ENCODE measurements at regions of chr6 and their contacts with region 1.

Region 1: DNA sequence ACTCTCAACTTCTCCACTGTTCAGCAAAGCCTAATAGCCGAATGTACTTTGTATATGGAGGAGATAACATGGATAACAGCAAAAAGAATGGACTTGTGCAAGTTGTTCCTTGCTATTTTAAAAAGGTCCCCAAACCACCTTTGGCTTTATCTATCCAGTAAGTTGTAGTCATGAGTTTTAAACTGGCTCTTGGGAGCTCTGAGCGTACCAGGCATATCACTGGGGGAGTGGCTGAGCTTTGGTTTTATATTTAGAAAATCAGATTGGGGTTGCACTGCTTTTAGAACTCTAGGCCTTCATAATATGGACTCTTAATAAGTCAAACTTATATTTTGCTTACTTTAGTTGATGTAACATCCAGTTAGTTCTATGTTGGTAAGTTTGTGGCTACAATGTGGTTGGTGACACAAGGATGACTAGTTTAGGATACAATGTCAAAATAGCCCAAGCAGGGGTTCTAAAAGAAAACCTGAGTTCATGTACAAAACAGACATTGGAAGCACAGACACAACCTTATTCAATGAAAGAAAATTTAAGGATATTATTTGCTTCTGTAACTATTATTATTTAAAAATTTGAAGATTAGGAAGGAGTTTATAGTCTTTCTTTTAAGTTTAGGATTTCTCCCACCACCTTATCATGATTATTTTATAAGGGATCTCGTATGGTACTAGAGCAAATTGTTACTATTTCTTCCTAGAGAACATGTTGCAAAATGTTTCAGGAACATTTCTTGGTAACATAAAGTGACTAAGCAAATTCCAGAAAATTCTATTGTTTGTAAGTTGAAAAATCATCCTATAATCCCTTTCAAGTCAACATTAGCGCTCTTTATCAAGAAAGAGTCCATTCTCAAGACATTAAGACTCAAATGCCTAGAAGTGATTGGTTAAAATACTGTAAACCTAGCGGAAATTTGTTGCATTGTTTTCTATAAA is 165.8 kb upstream of the SUPT3H start:
- DNase-seq: no peak
- H3K4me3 Mint-ChIP-seq: no peak overlapping the region
- H3K27ac Mint-ChIP-seq: no peak overlapping the region
- H3K4me1 Mint-ChIP-seq: peaks cover 23% of the 10 kb centered on the region
- H3K27me3 Mint-ChIP-seq: no peaks in the 10 kb centered on the region

Region 2: DNA sequence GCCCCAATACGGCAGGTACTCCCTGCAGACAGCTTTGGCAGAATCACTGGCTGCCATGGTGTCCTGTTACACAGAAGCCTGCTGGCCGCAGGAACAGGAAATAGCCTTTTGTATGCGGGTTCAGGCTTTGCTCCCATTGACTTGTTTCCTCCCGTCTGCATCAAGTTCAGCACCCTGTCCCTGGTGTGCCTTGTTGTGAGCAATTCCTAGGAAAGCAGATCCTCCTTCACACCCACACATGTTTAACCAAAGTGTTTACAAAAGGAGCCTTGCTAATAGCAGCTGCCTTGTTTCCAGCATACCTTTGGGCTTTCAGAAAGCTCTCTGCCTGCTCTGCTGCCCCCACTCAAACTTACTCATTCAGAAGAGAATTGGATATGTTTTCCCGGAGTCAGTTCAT is 38.6 kb before region 1 on chr6:
- intact Hi-C with region 1: loop called (anchors 5 kb)
- DNase-seq: no peak
- H3K4me3 Mint-ChIP-seq: no peak overlapping the region
- H3K27ac Mint-ChIP-seq: no peak overlapping the region
- H3K4me1 Mint-ChIP-seq: peaks cover 22% of the 10 kb centered on the region
- H3K27me3 Mint-ChIP-seq: no peaks in the 10 kb centered on the region